ENCODE measurements at regions of chr9 and their contacts with region 1.

Region 1: DNA sequence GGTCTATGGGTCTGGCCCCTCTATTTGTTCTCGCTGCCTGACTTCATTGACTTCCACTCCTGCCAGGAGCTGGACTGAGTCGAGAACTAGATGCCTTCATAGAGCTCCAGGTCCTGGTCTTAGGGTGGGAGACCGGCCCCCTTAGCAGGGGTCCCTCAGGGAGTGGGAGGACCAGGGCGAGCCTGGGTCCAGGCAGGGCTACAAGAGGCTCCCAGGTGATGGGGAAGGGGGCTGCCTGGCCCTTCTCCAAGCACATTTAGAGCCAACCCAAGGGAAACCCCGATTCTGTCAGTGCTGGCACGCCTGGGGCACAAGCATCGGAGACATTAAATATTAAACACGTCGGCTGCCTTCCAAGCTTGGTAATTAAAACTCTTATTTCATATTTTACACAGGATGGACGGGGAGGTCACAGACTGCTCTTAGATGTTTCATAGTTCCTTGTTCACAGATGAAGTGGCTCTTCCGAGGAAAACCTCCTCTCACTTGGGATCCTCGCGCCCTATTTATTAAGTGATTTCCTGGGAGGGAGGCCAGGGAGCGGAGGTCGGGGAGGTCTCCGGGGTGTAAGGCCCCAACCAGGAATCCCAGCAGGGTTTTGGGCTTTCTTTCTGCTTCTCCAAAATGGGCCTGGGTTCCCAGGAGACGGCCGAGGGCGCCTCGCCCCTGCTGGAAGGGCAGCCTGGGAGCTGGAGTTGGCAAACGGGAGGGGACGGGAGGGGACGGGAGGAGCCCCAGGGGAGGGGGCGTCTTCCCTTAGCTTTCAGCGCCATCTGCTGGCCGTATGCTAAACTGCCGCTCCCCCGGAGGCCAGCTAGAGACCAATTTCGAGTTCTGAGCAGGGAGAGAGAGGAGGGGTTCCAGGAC is 23.4 kb upstream of the ZBTB43 start:
- DNase-seq: peak; percentile 97
- ATAC-seq: peak; percentile 79
- H3K4me3 Mint-ChIP-seq: peak overlapping the region; percentile 27
- H3K27ac Mint-ChIP-seq: no peak overlapping the region
- H3K4me1 Mint-ChIP-seq: 0 out of 2 replicates have a peak, but pooled peaks cover 4% of the 10 kb centered on the region
- H3K27me3 Mint-ChIP-seq: peaks cover 9% of the 10 kb centered on the region; the same call in 1 of the 2 replicates
- CTCF ChIP-seq: peak; percentile 98

Region 2: GRCh38 chr9:126301985-126302603 is 479.3 kb before region 1 on chr9:
- CTCF ChIA-PET with region 1: no interaction called
- POLR2A ChIA-PET with region 1: no interaction called
- DNase-seq: peak; percentile 61
- ATAC-seq: peak; percentile 88
- H3K4me3 Mint-ChIP-seq: no peak overlapping the region
- H3K27ac Mint-ChIP-seq: no peak overlapping the region
- H3K4me1 Mint-ChIP-seq: no peaks in the 10 kb centered on the region; the same call in 1 of the 2 replicates
- H3K27me3 Mint-ChIP-seq: no peaks in the 10 kb centered on the region
- CTCF ChIP-seq: no peak

Region 3: DNA sequence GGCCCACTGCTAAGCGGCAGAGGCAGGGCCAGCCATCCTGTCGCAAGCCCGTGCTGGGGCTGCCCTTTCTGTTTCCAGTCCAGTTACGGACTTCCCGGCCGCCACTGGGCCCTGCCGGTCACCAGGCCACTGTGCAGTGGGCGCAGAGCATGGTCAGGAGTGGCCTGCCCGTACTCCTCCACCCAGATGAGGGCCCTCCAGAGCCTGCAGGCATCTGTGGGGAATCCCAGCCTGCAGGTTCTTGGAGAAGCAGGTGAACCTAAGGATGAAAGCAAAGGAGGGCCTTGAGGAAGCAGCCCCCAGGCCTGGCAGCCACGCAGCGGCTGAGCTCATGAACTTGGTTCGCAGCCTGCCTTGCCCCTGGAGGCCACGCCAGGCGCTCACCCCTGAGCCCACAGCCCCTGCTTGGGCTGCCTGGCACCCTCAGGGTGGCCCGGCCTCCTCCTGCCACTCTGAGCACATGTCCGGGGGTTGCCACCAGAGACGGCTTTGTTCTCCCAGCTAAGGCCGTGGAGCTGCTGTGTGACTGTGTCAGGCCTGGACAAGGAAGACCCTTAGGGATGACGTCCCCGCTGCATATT is 275.0 kb before region 1 on chr9:
- CTCF ChIA-PET with region 1: interaction called, 56 read pairs
- POLR2A ChIA-PET with region 1: no interaction called
- DNase-seq: no peak
- ATAC-seq: no peak
- H3K4me3 Mint-ChIP-seq: no peak overlapping the region
- H3K27ac Mint-ChIP-seq: no peak overlapping the region
- H3K4me1 Mint-ChIP-seq: no peaks in the 10 kb centered on the region
- H3K27me3 Mint-ChIP-seq: no peaks in the 10 kb centered on the region
- CTCF ChIP-seq: no peak

Region 4: GRCh38 chr9:126558051-126558665 is 223.3 kb before region 1 on chr9:
- CTCF ChIA-PET with region 1: interaction called, 24 read pairs
- POLR2A ChIA-PET with region 1: no interaction called
- DNase-seq: peak; percentile 85
- ATAC-seq: peak; percentile 86
- H3K4me3 Mint-ChIP-seq: no peak overlapping the region
- H3K27ac Mint-ChIP-seq: no peak overlapping the region
- H3K4me1 Mint-ChIP-seq: peaks cover 7% of the 10 kb centered on the region
- H3K27me3 Mint-ChIP-seq: peaks cover 3% of the 10 kb centered on the region; the same call in 1 of the 2 replicates
- CTCF ChIP-seq: peak; percentile 98

Region 5: DNA sequence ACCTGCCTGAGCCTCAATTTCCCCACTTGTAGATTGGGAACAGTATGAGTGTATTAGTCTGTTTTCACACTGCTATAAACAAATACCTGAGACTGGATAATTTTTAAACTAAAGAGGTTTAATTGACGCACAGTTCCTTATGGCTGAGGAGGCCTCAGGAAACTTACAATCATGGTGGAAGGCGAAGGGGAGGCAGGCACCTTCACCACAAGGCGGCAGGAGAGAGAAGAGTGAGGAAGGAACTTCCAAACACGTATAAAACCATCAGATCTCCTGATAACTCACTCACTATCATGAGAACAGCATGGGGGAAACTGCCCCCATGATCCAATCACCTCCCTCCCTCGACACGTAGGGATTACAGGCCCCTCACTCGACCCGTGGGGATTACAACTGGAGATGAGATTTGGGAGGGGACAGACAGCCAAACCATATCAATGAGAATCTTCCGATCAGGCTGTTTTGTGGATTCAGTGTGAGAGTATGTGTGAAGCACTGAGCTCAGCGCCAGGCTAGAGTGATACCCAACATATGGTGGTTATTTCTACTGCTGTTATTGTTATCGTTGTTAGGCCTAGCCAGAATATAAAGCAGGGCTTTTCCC is 182.3 kb before region 1 on chr9:
- CTCF ChIA-PET with region 1: interaction called, 11 read pairs
- POLR2A ChIA-PET with region 1: no interaction called
- DNase-seq: peak; percentile 53
- ATAC-seq: peak; percentile 67
- H3K4me3 Mint-ChIP-seq: no peak overlapping the region
- H3K27ac Mint-ChIP-seq: no peak overlapping the region
- H3K4me1 Mint-ChIP-seq: no peaks in the 10 kb centered on the region
- H3K27me3 Mint-ChIP-seq: no peaks in the 10 kb centered on the region
- CTCF ChIP-seq: 0 out of 2 replicates have a peak, but pooled peaks have one; percentile 17

Region 6: DNA sequence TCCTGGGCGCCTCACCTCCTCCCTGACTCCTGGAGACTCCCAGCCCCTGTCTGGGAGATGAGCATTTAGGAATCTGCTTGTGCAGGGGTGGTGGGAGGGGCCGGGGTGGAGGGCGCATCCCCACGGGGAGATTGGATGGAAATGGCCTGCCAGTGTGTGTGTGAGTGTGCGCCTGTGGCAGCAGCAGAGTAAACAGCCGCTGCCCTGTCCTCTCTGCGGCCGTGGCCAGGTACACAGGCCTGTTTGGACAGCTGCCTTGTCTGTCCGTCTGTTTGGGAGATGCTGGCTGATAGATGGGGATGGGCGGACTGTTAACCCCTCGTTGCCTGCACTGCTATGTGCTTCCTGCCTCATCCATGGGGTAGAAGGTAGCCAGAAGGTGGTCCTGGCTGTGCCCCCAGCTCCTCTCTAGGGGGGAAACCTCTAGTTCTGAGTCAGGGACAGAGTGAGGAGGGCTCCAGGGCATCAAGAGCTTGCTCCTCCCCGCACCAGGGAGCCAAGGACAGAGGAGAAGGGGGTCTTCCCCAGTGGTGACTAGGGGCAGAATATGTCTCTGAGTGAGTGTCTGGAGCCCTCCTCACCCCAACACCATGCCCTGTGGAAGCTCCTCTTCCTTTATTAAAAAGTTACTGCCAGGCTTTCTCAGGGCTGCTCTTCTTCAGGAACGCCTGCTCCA is 107.6 kb before region 1 on chr9:
- CTCF ChIA-PET with region 1: interaction called, 15 read pairs
- POLR2A ChIA-PET with region 1: no interaction called
- DNase-seq: peak; percentile 50
- ATAC-seq: no peak
- H3K4me3 Mint-ChIP-seq: peak overlapping the region; percentile 24; the same call in 1 of the 2 replicates
- H3K27ac Mint-ChIP-seq: no peak overlapping the region
- H3K4me1 Mint-ChIP-seq: peaks cover 49% of the 10 kb centered on the region
- H3K27me3 Mint-ChIP-seq: peaks cover 70% of the 10 kb centered on the region
- CTCF ChIP-seq: no peak

Region 7: GRCh38 chr9:126763130-126763764 is 18.2 kb before region 1 on chr9:
- CTCF ChIA-PET with region 1: interaction called, 10 read pairs
- POLR2A ChIA-PET with region 1: no interaction called
- DNase-seq: no peak
- ATAC-seq: peak; percentile 90
- H3K4me3 Mint-ChIP-seq: no peak overlapping the region
- H3K27ac Mint-ChIP-seq: no peak overlapping the region
- H3K4me1 Mint-ChIP-seq: no peaks in the 10 kb centered on the region
- H3K27me3 Mint-ChIP-seq: peaks cover 6% of the 10 kb centered on the region; the same call in 1 of the 2 replicates
- CTCF ChIP-seq: no peak

Region 8: DNA sequence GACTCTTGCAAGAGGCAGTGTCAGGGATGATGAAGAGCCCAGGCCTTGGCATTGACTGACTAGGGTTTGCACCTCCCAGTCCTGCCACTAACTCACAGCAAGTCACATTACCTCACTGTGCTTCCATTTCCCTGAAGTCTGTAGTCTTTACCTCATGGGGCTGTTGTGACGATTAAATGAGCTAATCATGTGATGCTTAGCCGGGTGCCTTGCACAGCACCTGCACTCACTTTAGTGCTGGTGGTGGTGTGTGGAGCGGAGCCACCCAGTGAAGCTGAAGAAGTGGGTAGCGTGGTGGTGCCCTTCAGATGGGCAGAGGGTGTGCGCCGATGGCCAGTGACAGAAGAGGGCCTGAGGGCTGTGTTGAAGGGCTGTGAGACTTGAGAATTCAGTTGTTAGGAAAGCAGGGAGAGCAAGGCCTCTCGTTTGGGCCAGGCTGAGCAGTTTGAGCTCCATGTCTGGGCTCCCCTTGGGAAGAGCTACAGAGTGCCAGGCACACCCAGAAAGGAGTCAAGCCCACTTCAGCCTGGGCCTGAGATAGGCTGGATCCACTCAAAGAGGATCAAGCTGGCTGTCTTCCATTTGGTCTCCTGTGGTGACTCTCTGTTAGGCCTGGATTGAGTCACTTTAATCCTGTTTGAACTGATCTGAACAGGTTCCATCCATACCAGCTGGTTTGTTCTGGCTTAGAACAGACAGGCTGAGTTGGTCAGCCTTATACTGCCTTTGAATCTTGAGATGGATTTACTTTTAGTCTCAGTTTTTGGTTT is 175.7 kb after region 1 on chr9:
- CTCF ChIA-PET with region 1: no interaction called
- POLR2A ChIA-PET with region 1: no interaction called
- DNase-seq: no peak
- ATAC-seq: peak; percentile 41
- H3K4me3 Mint-ChIP-seq: no peak overlapping the region
- H3K27ac Mint-ChIP-seq: peak overlapping the region; percentile 95
- H3K4me1 Mint-ChIP-seq: peaks cover 5% of the 10 kb centered on the region
- H3K27me3 Mint-ChIP-seq: no peaks in the 10 kb centered on the region
- CTCF ChIP-seq: no peak

Measured in WTC11 (cell line).